Activated naive CD4-positive, alpha-beta T cell treated with anti-CD3 and anti-CD28 coated beads for 36 hours (primary cell): ENCODE measurements at regions of chr9 and their contacts with region 1.

Region 1: GRCh38 chr9:6055213-6055612 is 39.8 kb upstream of the RANBP6 start:
- DNase-seq: peak; percentile 65
- H3K4me3 Mint-ChIP-seq: no peak overlapping the region
- H3K27ac Mint-ChIP-seq: no peak overlapping the region
- H3K4me1 Mint-ChIP-seq: peaks cover 7% of the 10 kb centered on the region
- H3K27me3 Mint-ChIP-seq: peaks cover 3% of the 10 kb centered on the region

Region 2: GRCh38 chr9:6015278-6016157 is 39.7 kb before region 1 on chr9 and contains the start of gene RANBP6:
- CTCF ChIA-PET with region 1: interaction called, 5 read pairs
- intact Hi-C with region 1: loop called (anchors 1 kb)
- DNase-seq: peak; percentile 95
- H3K4me3 Mint-ChIP-seq: peak within 1 kb of the TSS; percentile 98
- H3K27ac Mint-ChIP-seq: peak within 1 kb of the TSS; percentile 99
- H3K4me1 Mint-ChIP-seq: peaks cover 42% of the 10 kb centered on the region
- H3K27me3 Mint-ChIP-seq: no peaks in the 10 kb centered on the region
- total RNA-seq, gene RANBP6: 19.0 to 19.5 TPM

Region 3: DNA sequence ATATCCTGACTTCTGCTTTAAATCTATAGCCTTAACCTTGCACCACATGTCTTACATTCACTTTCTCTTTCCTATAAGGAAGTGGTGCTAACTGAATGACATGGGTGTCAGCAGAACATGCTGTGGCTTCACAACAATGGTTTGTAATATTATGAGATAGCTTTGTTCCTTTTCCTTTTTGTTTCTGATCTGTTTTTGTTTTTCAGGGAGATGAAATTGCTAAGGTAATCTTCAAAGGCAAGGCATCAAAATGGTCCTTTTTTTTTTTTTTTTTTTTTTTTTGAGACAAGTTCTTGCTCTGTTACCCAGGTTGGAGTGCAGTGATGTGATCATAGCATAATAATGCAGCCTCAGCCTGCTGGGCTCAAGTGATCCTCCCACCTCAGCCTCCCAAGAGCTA is 13.8 kb after region 1 on chr9:
- CTCF ChIA-PET with region 1: interaction called, 28 read pairs
- intact Hi-C with region 1: no loop called
- DNase-seq: peak; percentile 38
- H3K4me3 Mint-ChIP-seq: peak overlapping the region; percentile 39
- H3K27ac Mint-ChIP-seq: peak overlapping the region; percentile 81
- H3K4me1 Mint-ChIP-seq: peaks cover 18% of the 10 kb centered on the region
- H3K27me3 Mint-ChIP-seq: no peaks in the 10 kb centered on the region

Region 4: DNA sequence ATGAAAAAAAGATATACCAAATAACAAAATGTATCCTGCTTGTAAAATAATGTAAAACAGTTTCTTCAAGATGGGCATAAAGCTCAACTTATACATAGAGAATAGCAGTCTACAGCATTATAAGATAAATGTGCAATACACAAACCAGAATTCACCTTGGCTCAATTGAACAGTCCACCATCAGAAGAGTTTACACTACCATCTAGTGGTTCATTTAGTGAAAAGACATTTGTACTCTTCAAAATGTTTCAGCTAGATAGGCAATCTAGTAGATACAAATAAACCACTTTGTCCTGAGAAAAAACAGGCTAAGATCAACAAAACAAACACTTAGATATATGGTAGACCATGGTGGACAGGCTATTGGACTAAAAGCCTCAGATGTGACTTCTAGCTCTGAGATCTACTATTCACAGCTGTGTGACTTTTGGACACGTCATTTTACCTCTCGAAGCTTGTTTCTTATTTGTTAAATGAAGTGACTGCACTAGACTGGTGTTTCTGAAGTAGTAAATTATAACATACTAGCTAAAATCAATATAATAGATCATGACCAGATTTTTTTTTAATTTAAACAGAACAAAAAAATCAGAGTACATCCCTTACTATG is 250.8 kb after region 1 on chr9:
- CTCF ChIA-PET with region 1: interaction called, 40 read pairs
- intact Hi-C with region 1: loop called (anchors 1 kb)
- DNase-seq: no peak
- H3K4me3 Mint-ChIP-seq: no peak overlapping the region
- H3K27ac Mint-ChIP-seq: no peak overlapping the region
- H3K4me1 Mint-ChIP-seq: no peaks in the 10 kb centered on the region
- H3K27me3 Mint-ChIP-seq: no peaks in the 10 kb centered on the region

Region 5: GRCh38 chr9:6566409-6567139 is 511.4 kb after region 1 on chr9:
- CTCF ChIA-PET with region 1: interaction called, 6 read pairs
- intact Hi-C with region 1: loop called (anchors 1 kb)
- DNase-seq: peak; percentile 63
- H3K4me3 Mint-ChIP-seq: no peak overlapping the region
- H3K27ac Mint-ChIP-seq: peak overlapping the region; percentile 30
- H3K4me1 Mint-ChIP-seq: peaks cover 11% of the 10 kb centered on the region
- H3K27me3 Mint-ChIP-seq: no peaks in the 10 kb centered on the region